A673 (cell line): ENCODE measurements at regions of chr1 and their contacts with region 1.

Region 1: GRCh38 chr1:28886731-28887418 is 27.5 kb upstream of the EPB41 start:
- DNase-seq: peak; percentile 94
- H3K4me3 ChIP-seq: peak overlapping the region; percentile 98
- H3K27ac ChIP-seq: peak overlapping the region; percentile 95
- H3K4me1 ChIP-seq: peaks cover 68% of the 10 kb centered on the region
- H3K27me3 ChIP-seq: no peaks in the 10 kb centered on the region
- CTCF ChIP-seq: no peak

Region 2: DNA sequence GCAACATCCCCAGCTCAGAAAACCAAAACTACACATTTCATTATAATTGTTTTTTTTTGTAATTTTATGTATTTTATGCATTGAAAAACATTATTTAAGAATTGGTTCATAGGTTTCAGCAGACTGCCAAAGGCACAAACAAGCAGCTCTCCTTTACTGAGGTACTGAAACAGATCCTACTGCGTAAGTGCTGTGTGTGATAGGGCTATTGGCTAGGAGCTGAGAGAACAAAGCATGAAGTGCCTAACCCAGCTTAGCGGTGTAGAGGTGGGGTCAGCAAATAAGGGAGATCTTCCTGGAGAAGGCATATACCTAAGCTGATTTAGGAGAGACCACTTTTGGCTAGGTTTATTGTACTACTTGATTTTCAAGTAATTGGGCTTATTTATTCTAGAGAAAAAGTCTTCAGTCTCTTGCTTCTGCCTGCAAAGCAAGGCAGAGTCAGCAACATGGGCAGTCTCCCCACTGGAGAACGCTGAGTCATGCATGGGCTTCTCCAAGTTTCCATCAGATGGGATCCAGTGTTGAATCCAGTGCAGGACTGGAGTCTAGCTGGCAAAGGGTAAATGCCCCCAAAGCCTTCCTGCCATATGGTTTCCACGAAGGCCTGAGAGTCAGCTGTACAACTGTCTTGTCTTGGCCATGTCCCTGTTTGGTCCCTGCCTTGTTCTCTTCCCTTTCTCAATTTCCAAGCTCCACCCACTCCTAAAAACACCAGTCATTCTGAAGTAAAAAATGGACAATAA is 168.1 kb before region 1 on chr1:
- CTCF ChIA-PET with region 1: no interaction called
- POLR2A ChIA-PET with region 1: no interaction called
- intact Hi-C with region 1: no loop called
- DNase-seq: peak; percentile 14
- H3K4me3 ChIP-seq: no peak overlapping the region
- H3K27ac ChIP-seq: peak overlapping the region; percentile 60
- H3K4me1 ChIP-seq: peaks cover 6% of the 10 kb centered on the region
- H3K27me3 ChIP-seq: no peaks in the 10 kb centered on the region
- CTCF ChIP-seq: no peak

Region 3: DNA sequence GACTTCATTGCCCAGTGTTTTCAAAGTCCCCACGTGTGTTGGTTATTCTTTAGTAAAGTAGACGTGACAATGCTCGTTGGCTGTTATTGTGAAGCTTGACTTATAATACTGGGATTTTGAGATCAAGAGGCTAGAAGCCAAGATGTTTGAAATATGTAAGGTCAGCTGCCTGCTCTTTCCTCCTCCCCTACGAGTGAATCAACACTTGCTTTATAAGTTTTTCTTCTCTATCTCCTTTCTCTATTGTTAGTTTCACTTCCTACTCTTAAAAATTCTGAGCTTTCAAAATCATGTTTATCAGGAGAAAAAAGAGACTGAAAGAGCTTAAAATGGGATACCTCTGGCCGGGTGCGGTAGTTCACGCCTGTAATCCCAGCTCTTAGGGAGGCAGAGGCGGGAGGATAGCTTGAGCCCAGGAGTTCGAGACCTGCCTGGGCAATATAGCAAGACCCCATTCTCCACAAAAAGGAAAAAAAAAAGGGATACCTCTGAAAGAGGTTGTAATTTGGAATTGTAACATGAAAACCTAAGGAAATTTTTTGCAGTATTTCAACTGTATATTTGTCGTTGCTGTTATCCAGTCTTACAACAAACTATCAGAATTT is 99.5 kb after region 1 on chr1:
- CTCF ChIA-PET with region 1: interaction called, 4 read pairs
- POLR2A ChIA-PET with region 1: interaction called, 14 read pairs
- intact Hi-C with region 1: loop called (anchors 5 kb)
- DNase-seq: peak; percentile 28
- H3K4me3 ChIP-seq: peak overlapping the region; percentile 24
- H3K27ac ChIP-seq: peak overlapping the region; percentile 96
- H3K4me1 ChIP-seq: peaks cover 65% of the 10 kb centered on the region
- H3K27me3 ChIP-seq: no peaks in the 10 kb centered on the region
- CTCF ChIP-seq: no peak

Region 4: DNA sequence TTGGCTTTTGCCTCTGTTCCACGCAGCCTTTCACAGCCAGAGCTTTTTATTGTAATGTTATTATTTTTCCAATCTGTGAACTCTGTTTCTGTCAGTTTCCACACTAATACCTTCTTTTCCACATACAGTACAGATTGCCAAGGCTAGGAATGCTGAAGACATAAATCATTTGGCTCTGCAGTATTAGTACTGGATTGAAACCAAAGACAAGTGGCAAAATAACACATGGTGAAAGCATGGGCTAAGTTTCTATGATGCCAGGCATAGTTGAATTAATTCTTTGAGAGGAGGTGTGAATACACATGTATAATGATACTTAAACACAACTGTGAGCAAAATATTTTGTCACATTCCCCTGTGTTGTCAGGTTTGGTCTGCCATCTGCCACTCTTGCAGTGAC is 163.3 kb after region 1 on chr1:
- CTCF ChIA-PET with region 1: interaction called, 10 read pairs
- POLR2A ChIA-PET with region 1: no interaction called
- intact Hi-C with region 1: no loop called
- DNase-seq: no peak
- H3K4me3 ChIP-seq: no peak overlapping the region
- H3K27ac ChIP-seq: no peak overlapping the region
- H3K4me1 ChIP-seq: no peaks in the 10 kb centered on the region
- H3K27me3 ChIP-seq: no peaks in the 10 kb centered on the region
- CTCF ChIP-seq: no peak

Region 5: GRCh38 chr1:29197585-29197924 is 310.7 kb after region 1 on chr1:
- CTCF ChIA-PET with region 1: interaction called, 38 read pairs
- POLR2A ChIA-PET with region 1: interaction called, 7 read pairs
- intact Hi-C with region 1: no loop called
- DNase-seq: peak; percentile 45
- H3K4me3 ChIP-seq: no peak overlapping the region
- H3K27ac ChIP-seq: no peak overlapping the region
- H3K4me1 ChIP-seq: peaks cover 6% of the 10 kb centered on the region
- H3K27me3 ChIP-seq: no peaks in the 10 kb centered on the region
- CTCF ChIP-seq: peak; percentile 49